PC-9 (cell line): ENCODE measurements at regions of chr2 and their contacts with region 1.

Region 1: GRCh38 chr2:85551698-85552678 is 9.3 kb downstream of the GGCX start:
- DNase-seq: peak; percentile 75 to 80
- H3K4me3 ChIP-seq: no peak overlapping the region
- H3K27ac ChIP-seq: no peak overlapping the region
- H3K4me1 ChIP-seq: no peaks in the 10 kb centered on the region
- H3K27me3 ChIP-seq: no peaks in the 10 kb centered on the region
- CTCF ChIP-seq: peak; percentile 93

Region 2: DNA sequence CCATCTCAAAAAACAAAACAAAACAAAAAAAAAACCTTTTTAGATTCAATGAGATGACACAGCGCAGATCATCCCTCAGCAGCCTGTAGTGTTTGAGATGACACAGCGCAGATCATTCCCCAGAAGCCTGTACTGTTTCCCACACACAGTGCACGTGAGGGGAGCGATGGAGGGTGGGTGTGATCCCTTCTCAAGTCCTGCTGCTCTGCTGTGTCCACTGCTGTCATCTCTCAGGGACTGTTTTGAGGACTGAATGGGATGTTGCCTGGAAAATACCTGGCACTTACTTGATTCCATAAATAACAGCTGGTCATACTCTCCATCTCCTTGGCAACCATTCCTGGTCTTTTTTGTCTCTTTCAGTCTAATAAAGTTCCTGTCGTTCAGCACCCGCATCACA is 249.9 kb before region 1 on chr2:
- CTCF ChIA-PET with region 1: interaction called, 3 read pairs
- POLR2A ChIA-PET with region 1: no interaction called
- intact Hi-C with region 1: loop called (anchors 5 kb)
- DNase-seq: no peak
- H3K4me3 ChIP-seq: no peak overlapping the region
- H3K27ac ChIP-seq: no peak overlapping the region
- H3K4me1 ChIP-seq: no peaks in the 10 kb centered on the region
- H3K27me3 ChIP-seq: no peaks in the 10 kb centered on the region
- CTCF ChIP-seq: no peak

Region 3: GRCh38 chr2:85327822-85328617 is 224.0 kb before region 1 on chr2 and contains the start of gene TGOLN2:
- CTCF ChIA-PET with region 1: no interaction called
- POLR2A ChIA-PET with region 1: no interaction called
- intact Hi-C with region 1: loop called (anchors 5 kb)
- DNase-seq: peak; percentile 75 to 85
- H3K4me3 ChIP-seq: peak within 1 kb of the TSS; percentile 93
- H3K27ac ChIP-seq: peak within 1 kb of the TSS; percentile 68
- H3K4me1 ChIP-seq: peaks cover 30% of the 10 kb centered on the region
- H3K27me3 ChIP-seq: no peaks in the 10 kb centered on the region
- CTCF ChIP-seq: no peak; the same call in 1 of the 2 replicates
- total RNA-seq, gene TGOLN2: 86.1 and 87.2 TPM in 2 replicates

Region 4: DNA sequence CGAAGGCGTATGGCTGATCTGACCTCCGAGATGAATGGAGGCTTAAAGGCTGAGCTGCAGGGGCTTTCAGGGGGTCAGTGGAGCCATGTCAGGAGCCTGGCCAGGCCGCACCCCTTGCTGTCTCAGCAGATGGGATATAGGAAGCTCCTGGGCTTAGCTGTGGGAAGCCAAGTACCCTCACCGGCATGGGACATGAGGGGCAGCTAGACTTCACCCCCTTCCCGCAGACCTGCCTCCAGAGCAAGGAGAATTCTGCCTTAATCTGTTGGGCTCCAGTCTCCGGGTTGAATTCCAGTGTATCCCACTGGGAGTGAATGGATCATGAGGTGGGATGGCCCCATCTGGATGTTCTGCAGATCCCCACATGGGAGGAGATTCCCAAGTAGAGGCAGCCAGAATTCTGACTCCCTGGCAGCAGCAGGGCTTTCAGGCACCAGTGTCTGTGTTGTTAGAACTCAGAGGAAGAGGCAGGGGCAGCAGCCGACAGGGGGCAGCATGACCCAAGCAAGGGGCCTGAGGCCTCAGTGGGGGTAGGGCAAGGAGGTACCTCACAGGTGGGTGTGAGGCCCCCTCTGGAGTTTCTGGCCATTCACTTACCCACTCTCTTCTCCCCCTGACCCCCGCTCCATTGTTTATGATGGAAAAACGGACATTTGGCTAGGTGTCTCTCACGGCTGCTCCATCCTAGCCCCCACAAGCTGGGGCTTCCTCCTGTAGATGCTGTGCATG is 160.9 kb before region 1 on chr2:
- CTCF ChIA-PET with region 1: no interaction called
- POLR2A ChIA-PET with region 1: no interaction called
- intact Hi-C with region 1: loop called (anchors 1 kb)
- DNase-seq: peak in 1 of 2 experiments; percentile 65
- H3K4me3 ChIP-seq: no peak overlapping the region
- H3K27ac ChIP-seq: no peak overlapping the region
- H3K4me1 ChIP-seq: peaks cover 9% of the 10 kb centered on the region
- H3K27me3 ChIP-seq: no peaks in the 10 kb centered on the region
- CTCF ChIP-seq: peak; percentile 77

Region 5: GRCh38 chr2:85420536-85421259 is 131.3 kb before region 1 on chr2:
- CTCF ChIA-PET with region 1: interaction called, 6 read pairs
- POLR2A ChIA-PET with region 1: interaction called, 9 read pairs
- intact Hi-C with region 1: loop called (anchors 1 kb)
- DNase-seq: peak; percentile 57 to 82
- H3K4me3 ChIP-seq: no peak overlapping the region; the same call in 1 of the 2 replicates
- H3K27ac ChIP-seq: peak overlapping the region; percentile 65
- H3K4me1 ChIP-seq: peaks cover 46% of the 10 kb centered on the region
- H3K27me3 ChIP-seq: no peaks in the 10 kb centered on the region
- CTCF ChIP-seq: peak; percentile 100

Region 6: DNA sequence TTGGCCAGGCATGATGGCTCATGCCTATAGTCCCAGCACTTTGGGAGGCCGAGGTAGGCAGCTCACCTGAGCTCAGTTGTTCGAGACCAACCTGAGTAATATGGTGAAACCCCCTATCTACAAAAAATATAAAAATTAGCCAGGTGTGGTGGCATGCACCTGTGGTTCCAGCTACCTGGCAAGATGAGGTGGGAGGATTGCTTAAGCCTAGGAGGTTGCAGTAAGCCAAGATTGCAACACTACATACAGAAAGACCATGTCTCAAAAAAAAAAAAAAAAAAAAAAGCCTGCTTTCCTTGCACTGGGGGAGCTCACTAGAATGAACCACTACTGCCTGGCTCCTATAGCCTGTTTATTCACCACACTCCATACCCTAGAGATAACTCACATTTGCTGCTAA is 20.4 kb before region 1 on chr2:
- CTCF ChIA-PET with region 1: interaction called, 16 read pairs
- POLR2A ChIA-PET with region 1: no interaction called
- intact Hi-C with region 1: no loop called
- DNase-seq: peak in 1 of 2 experiments; percentile 65
- H3K4me3 ChIP-seq: no peak overlapping the region
- H3K27ac ChIP-seq: peak overlapping the region; percentile 37; the same call in 1 of the 2 replicates
- H3K4me1 ChIP-seq: peaks cover 16% of the 10 kb centered on the region
- H3K27me3 ChIP-seq: no peaks in the 10 kb centered on the region
- CTCF ChIP-seq: no peak